Activated CD4-positive, alpha-beta memory T cell treated with anti-CD3 and anti-CD28 coated beads for 36 hours (primary cell): ENCODE measurements at regions of chr21 and their contacts with region 1.

Region 1: GRCh38 chr21:29232601-29233546 is 65.8 kb upstream of the BACH1 start:
- DNase-seq: no peak
- H3K4me3 Mint-ChIP-seq: no peak overlapping the region
- H3K27ac Mint-ChIP-seq: peak overlapping the region; percentile 10
- H3K4me1 Mint-ChIP-seq: peaks cover 50% of the 10 kb centered on the region
- H3K27me3 Mint-ChIP-seq: peaks cover 24% of the 10 kb centered on the region

Region 2: DNA sequence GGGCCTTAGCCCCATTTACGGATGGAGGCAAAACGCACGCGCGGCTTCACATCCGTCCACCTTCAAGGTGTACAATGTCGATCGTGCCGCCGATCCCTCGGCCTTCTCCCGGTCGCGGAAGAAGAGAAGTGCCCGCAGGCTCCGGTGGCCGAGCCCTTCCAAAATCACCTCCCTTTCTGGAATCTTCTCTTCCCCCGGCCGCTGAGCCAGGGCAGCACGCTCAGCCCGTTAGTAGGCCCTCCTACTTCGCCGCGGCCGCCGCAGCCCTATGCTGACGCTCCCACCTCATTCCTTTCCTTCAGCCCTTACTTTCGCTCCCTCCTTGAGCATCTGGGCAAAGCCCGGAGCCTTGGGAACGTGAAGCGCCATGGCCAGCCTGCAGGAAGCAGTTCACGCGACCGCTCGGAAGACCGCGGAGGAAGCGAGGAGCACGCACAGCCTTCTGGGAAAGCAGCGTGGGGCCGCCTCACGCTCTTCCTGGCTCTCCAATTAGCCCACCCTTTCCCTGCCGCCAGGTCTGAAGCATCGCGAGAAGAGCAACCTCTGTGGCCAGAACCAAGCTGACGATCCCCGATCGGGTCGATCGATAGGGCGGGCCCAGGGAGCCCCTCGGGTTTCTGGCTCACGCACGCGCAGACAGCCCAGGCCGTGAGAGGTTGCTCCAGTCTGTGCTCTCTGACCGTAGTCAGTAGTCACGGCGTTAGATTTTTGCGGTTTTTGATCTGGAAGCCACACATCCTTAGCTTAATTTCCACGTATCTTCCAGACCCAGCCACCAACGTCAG is 159.5 kb before region 1 on chr21 and contains the start of gene CCT8:
- CTCF ChIA-PET with region 1: no interaction called
- POLR2A ChIA-PET with region 1: interaction called, 3 read pairs
- intact Hi-C with region 1: loop called (anchors 2 kb)
- DNase-seq: peak; percentile 99
- H3K4me3 Mint-ChIP-seq: peak within 1 kb of the TSS; percentile 96
- H3K27ac Mint-ChIP-seq: peak within 1 kb of the TSS; percentile 97
- H3K4me1 Mint-ChIP-seq: peaks cover 51% of the 10 kb centered on the region
- H3K27me3 Mint-ChIP-seq: no peaks in the 10 kb centered on the region
- total RNA-seq, gene CCT8: 431 to 435 TPM

Region 3: GRCh38 chr21:29181799-29182470 is 50.9 kb before region 1 on chr21:
- CTCF ChIA-PET with region 1: no interaction called
- POLR2A ChIA-PET with region 1: no interaction called
- intact Hi-C with region 1: loop called (anchors 1 kb)
- DNase-seq: no peak
- H3K4me3 Mint-ChIP-seq: peak overlapping the region; percentile 59
- H3K27ac Mint-ChIP-seq: peak overlapping the region; percentile 82
- H3K4me1 Mint-ChIP-seq: peaks cover 17% of the 10 kb centered on the region
- H3K27me3 Mint-ChIP-seq: no peaks in the 10 kb centered on the region

Region 4: DNA sequence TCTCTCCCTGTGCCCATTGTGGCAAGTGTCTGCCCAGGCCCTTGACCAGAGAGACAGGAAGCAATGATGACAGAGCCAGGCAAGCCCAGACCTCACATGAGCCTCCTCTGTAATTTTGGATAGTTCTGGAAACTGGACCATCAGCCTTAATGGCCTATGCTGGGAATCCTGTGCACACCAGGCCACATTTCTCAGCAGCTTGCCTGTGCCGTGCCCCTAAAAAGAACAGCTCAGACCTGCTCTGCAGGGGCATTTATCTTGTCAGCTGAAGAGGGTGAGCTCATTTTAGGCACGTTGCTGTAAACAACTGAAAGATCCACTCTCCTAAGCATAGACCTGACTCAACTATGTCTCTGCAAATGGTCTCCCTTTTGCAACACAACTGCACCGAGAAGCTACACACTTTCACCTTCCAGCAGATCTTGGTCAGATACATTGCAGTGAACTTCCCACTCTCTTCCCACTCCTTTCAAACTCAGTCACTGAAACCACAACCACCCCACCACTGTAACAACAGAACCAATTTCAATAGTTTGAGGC is 12.3 kb after region 1 on chr21:
- CTCF ChIA-PET with region 1: interaction called, 29 read pairs
- POLR2A ChIA-PET with region 1: interaction called, 18 read pairs
- intact Hi-C with region 1: loop called (anchors 1 kb)
- DNase-seq: peak; percentile 65
- H3K4me3 Mint-ChIP-seq: no peak overlapping the region
- H3K27ac Mint-ChIP-seq: no peak overlapping the region
- H3K4me1 Mint-ChIP-seq: peaks cover 12% of the 10 kb centered on the region
- H3K27me3 Mint-ChIP-seq: peaks cover 12% of the 10 kb centered on the region

Region 5: GRCh38 chr21:29436143-29436542 is 203.3 kb after region 1 on chr21:
- CTCF ChIA-PET with region 1: no interaction called
- POLR2A ChIA-PET with region 1: no interaction called
- intact Hi-C with region 1: loop called (anchors 5 kb)
- DNase-seq: peak; percentile 65
- H3K4me3 Mint-ChIP-seq: peak overlapping the region; percentile 64
- H3K27ac Mint-ChIP-seq: peak overlapping the region; percentile 80
- H3K4me1 Mint-ChIP-seq: peaks cover 36% of the 10 kb centered on the region
- H3K27me3 Mint-ChIP-seq: no peaks in the 10 kb centered on the region

Region 6: DNA sequence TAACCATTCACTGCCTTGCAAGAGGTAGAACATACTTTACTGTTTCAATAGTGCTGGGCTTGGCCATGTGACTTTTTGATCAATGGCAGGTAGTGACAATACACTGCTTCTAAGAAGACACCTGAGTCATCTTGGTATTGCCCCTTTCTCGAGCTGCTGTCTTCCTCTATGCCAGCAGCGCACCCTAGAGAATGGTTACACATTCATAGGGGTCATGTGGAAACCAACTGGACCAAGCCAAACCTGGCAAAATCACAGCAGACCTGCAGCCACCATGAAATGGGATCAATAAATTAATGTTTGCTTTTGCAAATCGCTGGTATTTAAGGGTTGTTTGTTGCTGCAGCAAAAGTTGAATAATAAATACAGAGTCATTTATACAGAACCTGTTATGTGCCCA is 584.6 kb after region 1 on chr21:
- CTCF ChIA-PET with region 1: no interaction called
- POLR2A ChIA-PET with region 1: no interaction called
- intact Hi-C with region 1: no loop called
- DNase-seq: no peak
- H3K4me3 Mint-ChIP-seq: no peak overlapping the region
- H3K27ac Mint-ChIP-seq: no peak overlapping the region
- H3K4me1 Mint-ChIP-seq: no peaks in the 10 kb centered on the region
- H3K27me3 Mint-ChIP-seq: peaks cover 3% of the 10 kb centered on the region